CD8-positive, alpha-beta T cell (primary cell): ENCODE measurements at regions of chr21 and their contacts with region 1.

Region 1: DNA sequence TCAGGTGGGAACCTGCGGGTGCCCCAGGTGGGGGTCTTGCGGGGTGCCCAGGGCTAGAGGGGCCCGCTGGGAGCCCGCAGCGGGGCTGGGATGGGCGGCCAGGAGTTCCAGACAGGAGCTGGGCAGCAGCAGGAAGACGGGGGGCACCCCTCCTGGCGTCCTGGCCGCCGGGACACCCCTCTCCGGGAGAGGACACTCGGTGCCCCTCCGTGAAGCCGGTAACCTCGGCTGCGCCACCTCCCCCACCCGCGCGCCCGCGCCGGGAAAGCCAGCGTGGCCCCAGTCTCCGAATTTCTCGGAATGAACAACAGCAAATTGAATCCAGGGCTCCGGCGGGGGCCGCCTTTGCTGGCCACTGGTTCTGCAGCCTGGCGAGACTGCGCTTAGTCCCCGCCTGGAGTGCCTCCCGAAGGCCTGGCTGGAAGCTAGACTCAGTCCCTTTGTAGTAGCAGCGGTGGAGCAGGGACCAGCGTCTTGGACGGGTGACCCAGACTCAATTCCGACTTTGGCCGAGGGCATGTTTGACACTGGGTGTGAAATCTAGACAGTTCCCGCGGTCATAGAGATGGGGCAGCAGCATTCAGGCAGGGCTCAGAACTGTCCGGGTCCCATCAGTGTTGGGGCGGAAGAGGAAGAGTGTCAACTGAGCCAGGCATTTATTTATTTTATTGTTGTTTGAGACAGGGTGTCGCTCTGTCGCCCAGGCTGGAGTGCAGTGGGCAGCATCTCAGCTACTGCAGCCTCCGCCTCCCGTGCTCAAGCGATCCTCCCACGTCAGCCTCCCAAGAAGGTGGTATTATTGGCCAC is 769 bp downstream of the IFNGR2 start:
- DNase-seq: peak in 4 of 9 experiments; percentile 16 to 68 (median 34)
- ATAC-seq: peak; percentile 17
- H3K4me3 ChIP-seq: peak overlapping the region; percentile 55 to 78
- H3K4me3 Mint-ChIP-seq: peak overlapping the region; percentile 84
- H3K27ac ChIP-seq: peak overlapping the region in 1 of 2 experiments; percentile 60
- H3K27ac Mint-ChIP-seq: peak overlapping the region; percentile 86
- H3K4me1 ChIP-seq: peaks cover 37% of the 10 kb centered on the region
- H3K4me1 Mint-ChIP-seq: peaks cover 54% of the 10 kb centered on the region
- H3K27me3 ChIP-seq: peaks cover 0 to 30% of the 10 kb centered on the region in 2 experiments
- H3K27me3 Mint-ChIP-seq: no peaks in the 10 kb centered on the region
- CTCF ChIP-seq: no peak

Region 2: DNA sequence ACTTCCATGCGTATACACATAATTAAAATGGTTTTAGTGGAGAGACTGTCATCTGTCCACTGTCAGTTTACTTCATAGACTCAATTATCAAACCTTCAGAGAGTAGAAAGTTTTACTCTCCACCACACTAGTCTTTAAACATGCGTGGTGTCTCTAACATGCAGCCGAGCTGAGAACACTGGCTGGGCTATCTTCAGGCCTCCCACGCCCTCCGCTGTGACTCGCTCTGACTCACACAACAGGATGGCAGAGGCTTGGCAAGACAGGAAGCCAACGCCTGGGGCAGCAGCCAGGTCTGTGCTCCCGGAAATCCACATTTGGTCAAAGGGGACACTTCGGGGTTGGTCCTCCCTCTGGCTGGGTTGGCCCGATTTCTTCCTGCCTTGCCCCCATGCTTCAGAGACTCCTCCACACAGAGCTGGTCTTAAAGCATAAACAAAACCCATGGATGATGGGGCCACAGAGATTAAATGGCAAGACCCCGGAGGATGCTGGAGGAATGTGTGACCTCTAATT is 23.4 kb before region 1 on chr21:
- CTCF ChIA-PET with region 1: interaction called, 4 read pairs
- POLR2A ChIA-PET with region 1: interaction called, 6 read pairs
- intact Hi-C with region 1: loop called (anchors 1 to 2 kb)
- DNase-seq: peak; percentile 53 to 88 (median 82)
- ATAC-seq: peak; percentile 72
- H3K4me3 ChIP-seq: peak overlapping the region in 1 of 2 experiments; percentile 17
- H3K4me3 Mint-ChIP-seq: peak overlapping the region; percentile 60
- H3K27ac ChIP-seq: peak overlapping the region; percentile 7 to 49
- H3K27ac Mint-ChIP-seq: peak overlapping the region; percentile 93
- H3K4me1 ChIP-seq: peaks cover 61% of the 10 kb centered on the region
- H3K4me1 Mint-ChIP-seq: peaks cover 60% of the 10 kb centered on the region
- H3K27me3 ChIP-seq: peaks cover 0 to 18% of the 10 kb centered on the region in 2 experiments
- H3K27me3 Mint-ChIP-seq: peaks cover 3% of the 10 kb centered on the region
- CTCF ChIP-seq: no peak

Region 3: GRCh38 chr21:33386222-33386784 is 17.7 kb before region 1 on chr21:
- CTCF ChIA-PET with region 1: interaction called, 4 read pairs
- POLR2A ChIA-PET with region 1: interaction called, 6 read pairs
- intact Hi-C with region 1: loop called (anchors 1 to 2 kb)
- DNase-seq: peak in 1 of 9 experiments; percentile 19
- ATAC-seq: no peak
- H3K4me3 ChIP-seq: no peak overlapping the region
- H3K4me3 Mint-ChIP-seq: no peak overlapping the region
- H3K27ac ChIP-seq: no peak overlapping the region
- H3K27ac Mint-ChIP-seq: no peak overlapping the region
- H3K4me1 ChIP-seq: peaks cover 42% of the 10 kb centered on the region
- H3K4me1 Mint-ChIP-seq: peaks cover 46% of the 10 kb centered on the region
- H3K27me3 ChIP-seq: peaks cover 0 to 33% of the 10 kb centered on the region in 2 experiments
- H3K27me3 Mint-ChIP-seq: peaks cover 3% of the 10 kb centered on the region
- CTCF ChIP-seq: no peak